CD4-positive, alpha-beta T cell (primary cell): ENCODE measurements at regions of chr2 and their contacts with region 1.

Region 1: DNA sequence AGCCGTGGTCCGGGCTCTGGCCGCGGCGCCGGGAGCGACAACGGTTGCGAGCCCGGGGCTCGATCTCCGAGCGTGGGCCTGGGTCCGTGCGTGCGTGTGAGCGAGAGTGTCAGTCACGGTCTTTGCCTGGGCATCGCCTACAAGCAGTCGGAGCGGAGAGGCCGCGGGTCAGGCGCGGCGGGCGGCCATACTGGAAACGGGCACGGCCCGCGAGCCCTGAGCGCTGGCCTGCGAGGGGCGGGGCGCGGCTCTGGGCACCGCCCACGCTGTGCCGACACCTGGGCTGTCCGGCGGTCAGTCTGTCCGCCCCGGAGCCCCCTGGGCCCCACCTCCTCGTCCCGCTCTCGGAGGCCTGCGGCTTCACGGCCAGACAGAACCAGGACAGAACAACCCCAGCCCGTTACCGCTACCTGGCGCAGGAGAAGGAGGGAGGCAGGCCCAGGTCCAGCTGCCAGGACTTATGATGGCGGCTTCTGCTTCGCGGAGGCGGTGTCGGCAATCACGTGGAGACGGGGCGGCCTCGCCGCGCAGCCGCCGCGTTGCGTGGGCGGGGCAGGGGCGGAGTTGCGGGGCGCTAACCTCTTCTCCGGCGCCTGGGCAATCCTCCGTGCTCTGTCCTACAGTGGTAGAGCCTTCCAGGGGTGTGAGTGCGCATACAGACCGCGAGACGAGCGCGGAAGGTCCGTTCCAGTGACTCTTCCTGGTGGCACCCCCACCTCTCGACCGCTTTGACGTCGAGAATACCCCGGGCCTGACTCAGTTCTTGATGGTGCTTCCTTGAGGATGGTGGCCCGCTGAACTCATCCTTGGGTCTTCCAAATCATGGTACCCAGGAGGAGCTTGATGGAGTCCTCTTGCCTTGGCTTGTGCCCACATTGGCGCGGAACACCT is at the start of gene TMEM131:
- DNase-seq: peak; percentile 90 to 97 (median 96)
- ATAC-seq: peak; percentile 87
- H3K4me3 ChIP-seq: peak within 1 kb of the TSS; percentile 70
- H3K4me3 Mint-ChIP-seq: peak within 1 kb of the TSS; percentile 94
- H3K27ac ChIP-seq: peak within 1 kb of the TSS; percentile 88 to 93
- H3K27ac Mint-ChIP-seq: peak within 1 kb of the TSS; percentile 86
- H3K4me1 ChIP-seq: peaks cover 17% of the 10 kb centered on the region
- H3K4me1 Mint-ChIP-seq: peaks cover 45% of the 10 kb centered on the region
- H3K27me3 ChIP-seq: no peaks in the 10 kb centered on the region
- H3K27me3 Mint-ChIP-seq: no peaks in the 10 kb centered on the region
- CTCF ChIP-seq: no peak
- total RNA-seq, gene TMEM131: 29.2 to 33.6 TPM

Region 2: DNA sequence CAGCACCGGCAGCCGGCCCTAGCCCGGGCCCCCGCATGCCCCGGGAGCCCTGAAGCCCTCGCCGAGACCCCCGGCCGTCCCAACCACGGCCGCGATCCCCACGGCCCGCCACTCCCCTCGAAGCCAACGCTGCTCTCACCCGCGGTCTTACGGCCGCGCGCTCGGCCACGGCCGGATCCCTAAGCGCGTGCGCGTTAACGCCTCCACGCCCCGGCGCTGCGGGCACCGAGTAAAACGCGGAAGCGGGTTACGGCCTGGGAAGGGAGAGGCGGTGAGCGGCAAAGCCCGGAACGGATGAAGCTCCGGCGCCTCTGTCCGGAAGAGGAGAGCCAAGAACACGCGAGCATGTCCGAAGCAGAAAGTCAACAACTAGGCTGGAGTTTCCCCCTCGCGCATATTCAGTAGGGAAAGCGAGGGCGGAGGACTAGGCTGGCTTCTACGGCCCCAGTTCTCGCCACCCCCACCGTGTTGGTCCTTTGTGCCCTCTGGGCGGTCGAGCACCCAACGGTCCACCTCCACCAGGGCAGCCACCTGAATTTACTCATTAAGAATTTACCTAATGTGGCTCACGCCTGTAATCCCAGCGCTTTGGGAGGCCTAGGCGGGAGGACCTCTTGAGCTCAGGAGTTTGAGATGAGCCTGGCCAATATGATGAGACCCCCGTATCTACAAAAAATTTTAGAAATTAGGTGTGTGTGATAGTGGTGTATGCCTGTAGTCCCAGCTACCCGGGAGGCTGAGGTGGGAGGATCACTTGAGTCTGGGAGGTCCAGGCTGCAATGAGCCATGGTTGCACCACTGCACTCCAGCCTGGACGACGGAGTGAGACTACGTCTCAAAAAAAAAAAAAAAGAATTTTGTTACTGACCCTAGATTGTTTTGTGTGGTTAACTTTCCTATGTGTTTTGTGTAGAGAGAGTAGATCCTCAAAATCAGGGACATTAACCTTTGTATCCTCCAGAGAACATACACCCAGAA is 1357.5 kb before region 1 on chr2 and contains the start of gene KANSL3:
- CTCF ChIA-PET with region 1: no interaction called
- POLR2A ChIA-PET with region 1: no interaction called
- intact Hi-C with region 1: loop called in 1 of 2 experiments (anchors 5 kb)
- DNase-seq: peak; percentile 79 to 95 (median 84)
- ATAC-seq: peak; percentile 85
- H3K4me3 ChIP-seq: peak within 1 kb of the TSS; percentile 98
- H3K4me3 Mint-ChIP-seq: peak within 1 kb of the TSS; percentile 99
- H3K27ac ChIP-seq: peak within 1 kb of the TSS; percentile 69 to 75
- H3K27ac Mint-ChIP-seq: peak within 1 kb of the TSS; percentile 96
- H3K4me1 ChIP-seq: peaks cover 29% of the 10 kb centered on the region
- H3K4me1 Mint-ChIP-seq: peaks cover 45% of the 10 kb centered on the region
- H3K27me3 ChIP-seq: no peaks in the 10 kb centered on the region
- H3K27me3 Mint-ChIP-seq: no peaks in the 10 kb centered on the region
- CTCF ChIP-seq: no peak
- total RNA-seq, gene KANSL3: 54.4 to 61.8 TPM

Region 3: DNA sequence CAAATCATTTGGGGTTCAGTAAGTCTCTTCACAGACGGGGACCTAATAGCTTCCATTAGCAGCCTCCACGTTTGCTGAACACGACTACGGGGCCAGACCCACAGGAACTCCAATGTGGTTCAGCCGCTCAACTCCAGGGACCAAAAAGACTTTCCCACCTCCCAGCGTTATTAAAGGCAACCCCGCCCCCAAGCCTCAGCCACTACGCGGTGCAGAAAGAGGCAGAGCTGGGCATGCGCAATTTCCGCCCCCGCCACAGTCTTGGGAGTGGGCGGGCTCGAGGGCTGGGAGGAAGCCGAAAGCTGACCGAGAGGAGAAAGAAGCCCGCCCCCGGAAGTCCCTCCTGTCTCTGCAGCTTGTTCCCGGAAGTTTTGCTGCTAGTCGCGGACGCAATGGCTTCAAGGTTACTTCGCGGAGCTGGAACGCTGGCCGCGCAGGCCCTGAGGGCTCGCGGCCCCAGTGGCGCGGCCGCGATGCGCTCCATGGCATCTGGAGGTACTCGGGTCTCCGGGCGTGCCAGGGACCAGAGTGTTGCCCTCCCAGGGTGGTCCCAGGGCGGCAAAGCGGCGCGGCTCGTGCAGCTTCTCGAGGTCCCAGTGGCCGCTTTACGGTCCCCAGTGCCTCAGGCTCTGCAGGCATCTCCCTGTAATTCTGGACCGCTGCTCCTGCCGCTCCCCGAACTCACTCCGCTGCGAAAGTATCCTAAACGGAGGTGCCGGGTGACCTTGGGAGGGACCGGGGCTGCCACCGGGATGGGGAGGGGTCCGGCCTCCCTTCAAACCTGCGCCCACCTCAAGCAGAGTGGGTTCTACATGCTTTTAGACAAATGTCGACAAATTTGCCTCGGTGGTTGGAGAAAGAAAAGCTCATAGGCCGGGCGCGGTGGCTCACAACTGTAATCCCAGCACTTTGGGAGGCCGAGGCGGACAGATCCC is 350.0 kb before region 1 on chr2 and contains the start of gene COX5B:
- CTCF ChIA-PET with region 1: no interaction called
- POLR2A ChIA-PET with region 1: interaction called, 3 read pairs
- intact Hi-C with region 1: loop called in 1 of 2 experiments (anchors 5 kb)
- DNase-seq: peak; percentile 96 to 99 (median 98)
- ATAC-seq: peak; percentile 96
- H3K4me3 ChIP-seq: peak within 1 kb of the TSS; percentile 97
- H3K4me3 Mint-ChIP-seq: peak within 1 kb of the TSS; percentile 97
- H3K27ac ChIP-seq: peak within 1 kb of the TSS; percentile 84 to 89
- H3K27ac Mint-ChIP-seq: peak within 1 kb of the TSS; percentile 93
- H3K4me1 ChIP-seq: peaks cover 18% of the 10 kb centered on the region
- H3K4me1 Mint-ChIP-seq: peaks cover 31% of the 10 kb centered on the region
- H3K27me3 ChIP-seq: no peaks in the 10 kb centered on the region
- H3K27me3 Mint-ChIP-seq: no peaks in the 10 kb centered on the region
- CTCF ChIP-seq: no peak
- total RNA-seq, gene COX5B: 112 to 121 TPM

Region 4: GRCh38 chr2:97718051-97718882 is 277.7 kb before region 1 on chr2:
- CTCF ChIA-PET with region 1: no interaction called
- POLR2A ChIA-PET with region 1: no interaction called
- intact Hi-C with region 1: loop called in 1 of 2 experiments (anchors 10 kb)
- DNase-seq: peak; percentile 57 to 89 (median 74)
- ATAC-seq: peak; percentile 88
- H3K4me3 ChIP-seq: peak overlapping the region; percentile 76
- H3K4me3 Mint-ChIP-seq: peak overlapping the region; percentile 89
- H3K27ac ChIP-seq: peak overlapping the region; percentile 75 to 88
- H3K27ac Mint-ChIP-seq: peak overlapping the region; percentile 98
- H3K4me1 ChIP-seq: peaks cover 95% of the 10 kb centered on the region
- H3K4me1 Mint-ChIP-seq: peaks cover 92% of the 10 kb centered on the region
- H3K27me3 ChIP-seq: no peaks in the 10 kb centered on the region
- H3K27me3 Mint-ChIP-seq: no peaks in the 10 kb centered on the region
- CTCF ChIP-seq: no peak

Region 5: GRCh38 chr2:98404556-98405220 is 408.7 kb after region 1 on chr2:
- CTCF ChIA-PET with region 1: no interaction called
- POLR2A ChIA-PET with region 1: no interaction called
- intact Hi-C with region 1: no loop called
- DNase-seq: no peak
- ATAC-seq: no peak
- H3K4me3 ChIP-seq: no peak overlapping the region
- H3K4me3 Mint-ChIP-seq: no peak overlapping the region
- H3K27ac ChIP-seq: no peak overlapping the region
- H3K27ac Mint-ChIP-seq: no peak overlapping the region
- H3K4me1 ChIP-seq: no peaks in the 10 kb centered on the region
- H3K4me1 Mint-ChIP-seq: no peaks in the 10 kb centered on the region
- H3K27me3 ChIP-seq: no peaks in the 10 kb centered on the region
- H3K27me3 Mint-ChIP-seq: no peaks in the 10 kb centered on the region
- CTCF ChIP-seq: no peak

Region 6: DNA sequence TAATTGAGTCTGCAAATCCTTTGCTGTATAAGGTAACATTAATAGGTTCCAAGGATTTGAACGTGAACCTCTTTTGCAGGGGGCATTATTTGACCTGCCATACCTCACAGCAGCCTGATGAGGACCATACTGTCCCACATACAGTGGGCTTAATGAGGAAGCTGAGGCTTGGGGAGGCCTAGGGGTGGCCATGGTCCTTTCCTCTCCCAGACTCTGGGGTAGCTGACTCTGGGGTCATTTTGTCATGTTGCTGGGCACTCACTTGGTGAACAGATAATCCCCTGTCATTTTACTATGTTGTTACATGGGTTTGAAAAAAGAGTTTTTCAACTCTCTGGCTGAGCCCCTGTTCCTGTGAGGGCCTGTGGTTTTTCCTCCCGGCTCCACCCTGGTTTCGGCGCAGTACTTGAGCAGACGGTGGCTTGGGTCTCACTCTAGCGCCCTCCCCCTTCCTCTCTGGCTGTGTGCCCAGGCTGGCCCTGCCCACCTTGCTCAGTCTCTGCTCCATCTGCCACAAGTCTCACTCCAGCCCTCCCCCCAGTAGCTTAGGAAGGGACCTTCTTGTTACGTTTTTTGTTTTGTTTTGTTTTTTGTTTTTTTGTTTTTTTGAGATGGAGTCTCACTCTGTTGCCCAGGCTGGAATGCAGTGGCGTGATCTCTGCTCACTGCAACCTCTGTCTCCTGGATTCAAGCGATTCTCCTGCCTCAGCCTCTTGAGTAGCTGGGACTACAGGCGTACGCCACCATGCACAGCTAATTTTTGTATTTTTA is 469.7 kb after region 1 on chr2:
- CTCF ChIA-PET with region 1: no interaction called
- POLR2A ChIA-PET with region 1: no interaction called
- intact Hi-C with region 1: loop called in 1 of 2 experiments (anchors 10 kb)
- DNase-seq: peak; percentile 62 to 94 (median 89)
- ATAC-seq: peak; percentile 71
- H3K4me3 ChIP-seq: peak overlapping the region; percentile 40
- H3K4me3 Mint-ChIP-seq: peak overlapping the region; percentile 89
- H3K27ac ChIP-seq: peak overlapping the region; percentile 79 to 87
- H3K27ac Mint-ChIP-seq: peak overlapping the region; percentile 95
- H3K4me1 ChIP-seq: peaks cover 95% of the 10 kb centered on the region
- H3K4me1 Mint-ChIP-seq: peaks cover 90% of the 10 kb centered on the region
- H3K27me3 ChIP-seq: no peaks in the 10 kb centered on the region
- H3K27me3 Mint-ChIP-seq: no peaks in the 10 kb centered on the region
- CTCF ChIP-seq: no peak

Region 7: DNA sequence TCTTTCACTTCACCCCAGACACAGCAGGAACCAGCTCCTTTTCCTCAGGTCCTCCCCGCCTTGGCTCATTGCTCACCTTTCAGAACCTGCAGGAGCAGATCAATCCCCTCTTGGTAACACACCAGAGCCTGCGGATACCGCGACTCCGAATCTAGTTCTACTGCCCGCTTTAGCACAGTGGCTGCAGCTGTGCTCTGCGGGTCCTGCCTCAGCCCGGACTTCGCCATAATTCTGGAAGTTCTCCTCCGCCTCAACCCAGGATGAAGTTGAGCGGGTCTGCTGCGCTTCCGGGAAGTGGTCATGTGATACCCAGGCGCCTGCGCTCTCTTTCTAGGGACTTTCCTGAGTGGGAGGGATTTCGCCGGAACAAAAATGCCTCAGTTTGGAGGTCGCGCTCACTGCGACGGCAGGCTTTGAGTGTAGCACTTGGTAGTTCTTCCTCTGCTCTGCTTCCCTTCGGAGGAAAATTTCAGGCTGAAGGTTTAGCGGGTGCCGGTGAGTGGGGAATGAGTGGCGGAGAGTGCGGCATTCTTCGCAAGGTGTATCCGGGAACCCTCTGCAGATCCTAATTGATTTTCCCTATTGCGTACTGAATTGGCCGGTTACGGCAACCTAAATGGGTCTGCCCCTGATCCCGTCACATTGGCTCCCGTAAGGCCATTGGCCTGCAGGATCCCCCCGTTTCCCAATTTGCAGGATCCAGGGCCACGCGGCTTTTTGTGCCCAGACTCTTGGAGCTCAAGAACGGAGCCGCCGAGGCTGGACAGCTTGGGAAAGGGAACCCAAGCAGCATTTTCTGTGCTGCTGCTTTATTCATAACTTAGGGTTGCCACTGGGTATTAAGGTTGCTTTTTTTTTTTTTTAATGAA is 1185.0 kb after region 1 on chr2 and contains the starts of genes MITD1 and MRPL30:
- CTCF ChIA-PET with region 1: no interaction called
- POLR2A ChIA-PET with region 1: no interaction called
- intact Hi-C with region 1: loop called in 1 of 2 experiments (anchors 10 kb)
- DNase-seq: peak; percentile 83 to 96 (median 87)
- ATAC-seq: peak; percentile 93
- H3K4me3 ChIP-seq: peak within 1 kb of the TSS; percentile 74
- H3K4me3 Mint-ChIP-seq: peak within 1 kb of the TSS; percentile 97
- H3K27ac ChIP-seq: peak within 1 kb of the TSS; percentile 74 to 78
- H3K27ac Mint-ChIP-seq: peak within 1 kb of the TSS; percentile 92
- H3K4me1 ChIP-seq: peaks cover 31% of the 10 kb centered on the region
- H3K4me1 Mint-ChIP-seq: peaks cover 77% of the 10 kb centered on the region
- H3K27me3 ChIP-seq: no peaks in the 10 kb centered on the region
- H3K27me3 Mint-ChIP-seq: no peaks in the 10 kb centered on the region
- CTCF ChIP-seq: no peak
- total RNA-seq, gene MITD1: 14.1 to 14.6 TPM
- total RNA-seq, gene MRPL30: 8.6 to 9.5 TPM